Activated CD8-positive, alpha-beta T cell treated with anti-CD3 and anti-CD28 coated beads, Interleukin-2, amount 10 ng/mL, durations not matched to agents 7 days and 5 days (primary cell): ENCODE measurements at regions of chr20 and their contacts with region 1.

Region 1: GRCh38 chr20:63802469-63803240 is 28.4 kb downstream of the ZBTB46 start:
- DNase-seq: no peak
- ATAC-seq: no peak
- H3K4me3 Mint-ChIP-seq: no peak overlapping the region
- H3K27ac Mint-ChIP-seq: no peak overlapping the region
- H3K4me1 Mint-ChIP-seq: peaks cover 9% of the 10 kb centered on the region
- H3K27me3 Mint-ChIP-seq: peaks cover 8% of the 10 kb centered on the region

Region 2: GRCh38 chr20:63574156-63574828 is 228.4 kb before region 1 on chr20 and contains the start of gene HELZ2:
- CTCF ChIA-PET with region 1: no interaction called
- POLR2A ChIA-PET with region 1: no interaction called
- DNase-seq: peak; percentile 85
- ATAC-seq: peak; percentile 84
- H3K4me3 Mint-ChIP-seq: peak within 1 kb of the TSS; percentile 83
- H3K27ac Mint-ChIP-seq: peak within 1 kb of the TSS; percentile 89
- H3K4me1 Mint-ChIP-seq: peaks cover 10% of the 10 kb centered on the region
- H3K27me3 Mint-ChIP-seq: peaks cover 18% of the 10 kb centered on the region
- total RNA-seq, gene HELZ2: 99.1 to 102 TPM

Region 3: GRCh38 chr20:63686492-63687321 is 115.9 kb before region 1 on chr20:
- CTCF ChIA-PET with region 1: no interaction called
- POLR2A ChIA-PET with region 1: no interaction called
- DNase-seq: no peak
- ATAC-seq: no peak
- H3K4me3 Mint-ChIP-seq: no peak overlapping the region
- H3K27ac Mint-ChIP-seq: no peak overlapping the region
- H3K4me1 Mint-ChIP-seq: no peaks in the 10 kb centered on the region
- H3K27me3 Mint-ChIP-seq: no peaks in the 10 kb centered on the region

Region 4: GRCh38 chr20:63785691-63786131 is 16.9 kb before region 1 on chr20:
- CTCF ChIA-PET with region 1: interaction called, 11 read pairs
- POLR2A ChIA-PET with region 1: no interaction called
- DNase-seq: no peak
- ATAC-seq: no peak
- H3K4me3 Mint-ChIP-seq: no peak overlapping the region
- H3K27ac Mint-ChIP-seq: no peak overlapping the region
- H3K4me1 Mint-ChIP-seq: peaks cover 22% of the 10 kb centered on the region
- H3K27me3 Mint-ChIP-seq: no peaks in the 10 kb centered on the region